ENCODE measurements at regions of chr14 and their contacts with region 1.

Region 1: GRCh38 chr14:75141967-75142366 is 15.1 kb upstream of the NEK9 start:
- DNase-seq: peak; percentile 49
- ATAC-seq: peak; percentile 51
- H3K4me3 Mint-ChIP-seq: no peak overlapping the region
- H3K27ac Mint-ChIP-seq: no peak overlapping the region
- H3K4me1 Mint-ChIP-seq: peaks cover 71% of the 10 kb centered on the region
- H3K27me3 Mint-ChIP-seq: no peaks in the 10 kb centered on the region

Region 2: GRCh38 chr14:75022655-75023054 is 119.3 kb before region 1 on chr14:
- CTCF ChIA-PET with region 1: no interaction called
- POLR2A ChIA-PET with region 1: no interaction called
- DNase-seq: peak; percentile 28
- ATAC-seq: no peak
- H3K4me3 Mint-ChIP-seq: no peak overlapping the region
- H3K27ac Mint-ChIP-seq: no peak overlapping the region
- H3K4me1 Mint-ChIP-seq: no peaks in the 10 kb centered on the region
- H3K27me3 Mint-ChIP-seq: no peaks in the 10 kb centered on the region

Region 3: DNA sequence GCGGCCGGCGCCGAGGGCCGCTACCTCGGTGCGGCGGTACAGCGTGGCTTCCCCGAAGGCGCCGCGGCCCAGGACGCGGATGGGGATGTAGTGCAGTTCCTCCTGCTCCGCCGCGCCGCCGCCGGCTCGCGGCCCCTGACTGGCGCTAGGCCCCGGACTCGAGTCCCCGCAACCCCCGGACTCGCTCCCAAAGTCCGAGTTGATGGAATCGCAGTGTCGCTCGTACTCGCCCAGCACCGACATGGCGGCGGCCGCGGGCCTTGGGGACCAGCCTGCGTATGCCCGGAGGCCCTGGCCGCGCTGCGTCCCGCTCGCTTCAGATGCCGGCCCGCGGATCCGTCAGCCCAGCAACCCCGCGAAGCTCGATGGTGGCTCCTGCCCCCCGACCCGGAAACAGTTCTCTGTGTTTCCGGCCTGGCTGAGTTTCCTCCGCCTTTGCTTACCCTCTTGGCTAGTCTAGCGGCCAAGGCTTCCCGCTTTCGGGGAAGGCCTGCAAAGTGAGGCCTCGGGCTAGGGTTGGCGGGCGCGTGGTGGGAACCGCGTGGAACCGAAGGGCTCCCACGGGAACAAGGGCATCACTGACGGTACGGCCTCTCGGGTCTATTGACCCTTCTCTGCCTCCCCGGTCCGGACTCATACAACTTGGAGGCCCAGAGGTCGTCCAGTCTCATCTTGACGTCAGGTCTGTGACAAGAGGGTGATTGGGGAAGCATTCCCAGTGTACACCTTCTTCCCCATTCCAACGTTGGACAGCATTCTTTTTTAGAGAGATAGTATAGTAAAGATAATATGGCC is 15.1 kb before region 1 on chr14 and contains the start of gene NEK9:
- CTCF ChIA-PET with region 1: interaction called, 12 read pairs
- POLR2A ChIA-PET with region 1: interaction called, 11 read pairs
- DNase-seq: peak; percentile 93
- ATAC-seq: peak; percentile 94
- H3K4me3 Mint-ChIP-seq: peak within 1 kb of the TSS; percentile 98
- H3K27ac Mint-ChIP-seq: peak within 1 kb of the TSS; percentile 97
- H3K4me1 Mint-ChIP-seq: peaks cover 45% of the 10 kb centered on the region
- H3K27me3 Mint-ChIP-seq: no peaks in the 10 kb centered on the region
- total RNA-seq, gene NEK9: 73.7 to 80.0 TPM

Region 4: DNA sequence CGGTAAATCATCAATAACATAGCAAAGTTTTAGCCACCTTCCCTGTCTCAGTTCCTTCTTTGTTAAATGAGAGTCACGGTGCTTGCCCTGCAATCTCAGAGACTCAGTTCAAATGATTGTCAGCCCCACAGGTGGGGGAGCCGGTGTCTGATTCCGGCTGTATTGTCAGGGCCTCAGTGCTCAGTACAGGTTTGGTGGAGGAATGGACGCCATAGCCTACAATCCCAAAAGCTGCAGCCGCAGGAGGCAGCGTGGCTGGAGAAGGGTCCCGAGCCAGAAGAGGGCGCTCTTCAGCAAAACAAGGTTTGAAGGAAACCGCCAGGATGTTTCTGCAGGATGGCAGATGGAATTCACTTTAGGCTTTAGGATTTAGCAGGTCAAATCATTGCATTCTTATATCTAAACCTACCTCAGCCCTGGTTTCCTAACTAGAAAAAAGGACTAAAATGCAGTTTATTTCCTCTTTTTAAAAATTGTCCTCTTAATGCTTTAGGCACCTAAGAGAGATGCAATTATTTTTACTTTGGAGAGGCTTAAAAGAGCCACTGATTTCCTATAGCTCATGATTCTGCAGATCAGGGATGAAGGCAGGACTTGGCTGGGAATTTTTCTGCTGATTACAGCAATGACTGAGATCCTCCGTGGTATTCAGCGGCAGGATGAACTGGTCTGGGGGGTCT is 165.9 kb after region 1 on chr14:
- CTCF ChIA-PET with region 1: interaction called, 95 read pairs
- POLR2A ChIA-PET with region 1: no interaction called
- DNase-seq: peak; percentile 81
- ATAC-seq: peak; percentile 80
- H3K4me3 Mint-ChIP-seq: no peak overlapping the region
- H3K27ac Mint-ChIP-seq: no peak overlapping the region
- H3K4me1 Mint-ChIP-seq: peaks cover 26% of the 10 kb centered on the region
- H3K27me3 Mint-ChIP-seq: peaks cover 3% of the 10 kb centered on the region

Region 5: GRCh38 chr14:75418849-75419768 is 277.1 kb after region 1 on chr14:
- CTCF ChIA-PET with region 1: no interaction called
- POLR2A ChIA-PET with region 1: no interaction called
- DNase-seq: peak; percentile 82
- ATAC-seq: peak; percentile 96
- H3K4me3 Mint-ChIP-seq: peak overlapping the region; percentile 44
- H3K27ac Mint-ChIP-seq: peak overlapping the region; percentile 78
- H3K4me1 Mint-ChIP-seq: peaks cover 29% of the 10 kb centered on the region
- H3K27me3 Mint-ChIP-seq: peaks cover 5% of the 10 kb centered on the region

Measured in activated CD8-positive, alpha-beta T cell treated with anti-CD3 and anti-CD28 coated beads, Interleukin-2, amount 10 ng/mL, durations not matched to agents 7 days and 5 days (primary cell).